SK-N-SH (cell line): ENCODE measurements at regions of chr6 and their contacts with region 1.

Region 1: DNA sequence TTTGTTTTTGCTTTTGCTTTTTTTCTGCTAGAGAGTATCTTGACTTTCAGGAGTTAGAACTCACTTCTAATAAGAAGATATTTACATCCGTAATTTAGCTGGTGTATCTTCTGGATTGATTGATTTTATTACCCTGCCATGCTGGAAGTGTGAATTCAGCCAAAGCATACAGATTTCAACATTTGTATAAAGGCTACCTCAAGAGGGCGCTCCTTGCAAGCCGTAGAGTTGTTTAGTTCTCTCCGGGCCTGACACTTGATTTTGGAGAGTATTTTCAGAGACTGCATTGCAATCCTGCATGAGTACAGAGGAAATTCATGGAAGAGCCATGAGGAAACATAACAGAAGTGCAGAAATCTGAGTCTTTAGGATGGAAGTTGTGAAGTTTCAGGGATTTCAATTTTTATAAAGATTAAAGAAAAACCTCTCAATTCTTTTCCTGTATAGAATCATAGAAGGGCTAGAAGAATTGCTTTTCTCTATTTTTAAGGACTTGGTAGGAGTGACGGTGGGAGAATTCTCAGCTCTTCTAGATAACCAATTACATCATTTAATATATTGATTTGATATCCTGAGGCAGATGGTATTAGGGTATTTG is 66.7 kb upstream of the TIAM2 start:
- DNase-seq: peak; percentile 62
- H3K4me3 ChIP-seq: no peak overlapping the region
- H3K27ac ChIP-seq: no peak overlapping the region
- H3K4me1 ChIP-seq: peaks cover 33 to 39% of the 10 kb centered on the region in 2 experiments
- H3K27me3 ChIP-seq: no peaks in the 10 kb centered on the region
- CTCF ChIP-seq: peak; percentile 80
- EP300 ChIP-seq: no peak
- RAD21 ChIP-seq: peak; percentile 97

Region 2: GRCh38 chr6:154805288-154805911 is 123.0 kb before region 1 on chr6:
- CTCF ChIA-PET with region 1: no interaction called
- POLR2A ChIA-PET with region 1: no interaction called
- DNase-seq: peak; percentile 47
- H3K4me3 ChIP-seq: no peak overlapping the region
- H3K27ac ChIP-seq: peak overlapping the region in 1 of 2 experiments; percentile 28; a peak in 2 of 4 replicates
- H3K4me1 ChIP-seq: peaks cover 3 to 5% of the 10 kb centered on the region in 2 experiments; a peak in 1 of 4 replicates
- H3K27me3 ChIP-seq: no peaks in the 10 kb centered on the region
- CTCF ChIP-seq: peak; percentile 65
- EP300 ChIP-seq: no peak
- RAD21 ChIP-seq: peak; percentile 86

Region 3: DNA sequence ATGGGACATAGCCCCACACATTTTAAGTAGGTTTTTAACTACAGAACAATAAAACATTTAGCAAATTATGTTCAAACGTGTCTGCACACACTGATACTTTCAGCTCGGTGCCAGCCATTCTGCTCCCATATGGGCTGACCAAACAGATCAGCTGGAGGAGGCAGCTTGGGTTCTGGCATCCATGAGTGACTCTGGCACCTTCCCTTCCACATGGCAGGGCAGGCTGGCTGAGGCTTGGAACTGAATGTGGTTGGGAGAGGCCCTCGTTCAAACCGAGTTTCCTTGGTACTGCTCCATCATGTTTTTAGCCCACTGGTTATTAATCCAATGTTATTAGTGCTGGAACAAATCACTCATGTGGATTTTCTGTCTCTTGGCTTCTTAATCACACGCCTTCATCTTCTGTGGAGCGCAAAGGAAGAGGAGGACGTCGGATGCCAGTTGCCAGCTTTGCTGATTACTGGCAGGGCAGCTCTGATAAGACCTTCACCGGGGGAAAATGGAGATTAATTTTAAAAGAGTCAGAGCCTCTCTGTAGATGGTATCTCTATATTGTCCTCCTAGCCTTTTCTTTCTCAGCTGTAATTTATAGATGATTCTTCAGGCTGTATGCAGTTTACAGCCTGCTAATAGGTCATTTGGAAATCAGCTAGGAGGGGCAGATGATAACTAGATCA is 26.4 kb before region 1 on chr6:
- CTCF ChIA-PET with region 1: interaction called, 11 read pairs
- POLR2A ChIA-PET with region 1: no interaction called
- DNase-seq: peak; percentile 71
- H3K4me3 ChIP-seq: no peak overlapping the region
- H3K27ac ChIP-seq: peak overlapping the region in 1 of 2 experiments; percentile 88; a peak in 3 of 4 replicates
- H3K4me1 ChIP-seq: peaks cover 0 to 32% of the 10 kb centered on the region in 2 experiments; a peak in 2 of 4 replicates
- H3K27me3 ChIP-seq: no peaks in the 10 kb centered on the region
- CTCF ChIP-seq: no peak
- EP300 ChIP-seq: no peak; a peak in 1 of 4 replicates
- RAD21 ChIP-seq: no peak

Region 4: DNA sequence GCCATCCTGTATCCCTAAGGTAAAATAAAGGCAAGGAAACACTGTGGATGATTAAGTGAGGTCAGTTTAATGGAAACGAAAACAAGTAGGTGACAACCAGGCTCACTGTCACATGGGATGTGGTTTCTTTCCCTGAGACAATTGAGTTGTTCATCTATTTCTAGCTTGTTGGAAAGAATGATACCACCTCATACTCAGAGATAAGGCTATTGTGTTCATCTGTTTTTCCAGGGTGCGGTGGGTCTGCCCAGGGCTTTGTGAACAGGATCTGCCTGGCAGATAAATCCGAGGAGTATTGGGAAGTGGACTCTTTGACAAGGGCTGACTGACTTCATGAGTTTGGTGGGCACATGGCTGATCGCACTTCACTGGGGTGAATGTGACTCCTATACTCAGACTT is 14.1 kb before region 1 on chr6:
- CTCF ChIA-PET with region 1: interaction called, 10 read pairs
- POLR2A ChIA-PET with region 1: no interaction called
- DNase-seq: no peak
- H3K4me3 ChIP-seq: no peak overlapping the region
- H3K27ac ChIP-seq: no peak overlapping the region
- H3K4me1 ChIP-seq: no peaks in the 10 kb centered on the region; a peak in 1 of 4 replicates
- H3K27me3 ChIP-seq: no peaks in the 10 kb centered on the region
- CTCF ChIP-seq: no peak
- EP300 ChIP-seq: no peak
- RAD21 ChIP-seq: no peak

Region 5: DNA sequence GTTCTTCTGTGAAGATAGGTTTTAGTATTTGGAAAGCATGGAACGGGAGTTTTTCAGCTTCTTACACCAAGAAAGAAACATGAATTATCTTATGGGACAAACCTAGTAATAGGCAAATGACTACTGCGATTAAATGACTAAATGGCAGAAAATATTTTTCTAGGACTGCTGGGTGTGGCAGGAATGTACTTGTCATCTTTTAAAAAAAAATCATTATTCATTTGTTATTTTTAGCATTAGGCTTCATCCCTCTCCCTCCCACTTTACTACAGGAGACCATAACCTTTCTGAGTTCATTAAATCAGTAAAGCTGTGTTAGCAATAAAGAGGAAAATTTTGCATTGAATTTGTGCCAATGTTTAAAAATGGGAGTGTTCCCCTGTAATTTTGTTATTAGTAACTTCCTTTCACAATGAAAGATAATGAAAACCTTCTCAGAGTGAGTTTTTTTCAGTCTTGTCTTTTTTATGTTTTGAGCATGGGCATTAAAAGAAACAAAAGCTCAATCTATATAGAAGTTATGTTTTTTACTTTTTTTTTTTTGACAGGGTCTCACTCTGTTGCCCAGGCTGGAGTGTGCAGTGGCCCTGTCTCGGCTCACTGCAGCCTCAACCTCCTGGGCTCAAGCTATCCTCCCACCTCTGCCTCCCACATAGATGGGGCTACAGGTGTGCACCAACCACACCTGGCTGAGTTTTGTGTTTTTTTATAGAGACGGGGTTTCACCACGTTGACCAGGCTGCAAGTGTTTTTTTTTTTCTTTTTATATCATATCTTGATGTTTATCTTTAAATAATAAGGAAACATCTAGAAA is 229.8 kb after region 1 on chr6:
- CTCF ChIA-PET with region 1: interaction called, 10 read pairs
- POLR2A ChIA-PET with region 1: no interaction called
- DNase-seq: no peak
- H3K4me3 ChIP-seq: no peak overlapping the region
- H3K27ac ChIP-seq: peak overlapping the region in 1 of 2 experiments; percentile 72; a peak in 2 of 4 replicates
- H3K4me1 ChIP-seq: peaks cover 19 to 26% of the 10 kb centered on the region in 2 experiments
- H3K27me3 ChIP-seq: no peaks in the 10 kb centered on the region
- CTCF ChIP-seq: no peak
- EP300 ChIP-seq: 0 out of 4 replicates have a peak, but pooled peaks of 1 of the 2 experiments have one; percentile 4
- RAD21 ChIP-seq: no peak

Region 6: GRCh38 chr6:155260686-155261085 is 332.3 kb after region 1 on chr6:
- CTCF ChIA-PET with region 1: interaction called, 10 read pairs
- POLR2A ChIA-PET with region 1: no interaction called
- DNase-seq: no peak
- H3K4me3 ChIP-seq: no peak overlapping the region
- H3K27ac ChIP-seq: peak overlapping the region; percentile 12 to 47; a peak in 2 of 4 replicates
- H3K4me1 ChIP-seq: peaks cover 4 to 64% of the 10 kb centered on the region in 2 experiments; a peak in 3 of 4 replicates
- H3K27me3 ChIP-seq: no peaks in the 10 kb centered on the region
- CTCF ChIP-seq: no peak
- EP300 ChIP-seq: no peak
- RAD21 ChIP-seq: no peak